ENCODE measurements at regions of chr13 and their contacts with region 1.

Region 1: GRCh38 chr13:72541674-72542073 is 185.8 kb downstream of the MZT1 start:
- DNase-seq: no peak
- ATAC-seq: no peak
- H3K4me3 ChIP-seq: no peak overlapping the region
- H3K27ac ChIP-seq: no peak overlapping the region
- H3K4me1 ChIP-seq: peaks cover 67% of the 10 kb centered on the region
- H3K27me3 ChIP-seq: no peaks in the 10 kb centered on the region
- CTCF ChIP-seq: no peak
- EP300 ChIP-seq: no peak
- POLR2A ChIP-seq: no peak
- RAD21 ChIP-seq: no peak

Region 2: DNA sequence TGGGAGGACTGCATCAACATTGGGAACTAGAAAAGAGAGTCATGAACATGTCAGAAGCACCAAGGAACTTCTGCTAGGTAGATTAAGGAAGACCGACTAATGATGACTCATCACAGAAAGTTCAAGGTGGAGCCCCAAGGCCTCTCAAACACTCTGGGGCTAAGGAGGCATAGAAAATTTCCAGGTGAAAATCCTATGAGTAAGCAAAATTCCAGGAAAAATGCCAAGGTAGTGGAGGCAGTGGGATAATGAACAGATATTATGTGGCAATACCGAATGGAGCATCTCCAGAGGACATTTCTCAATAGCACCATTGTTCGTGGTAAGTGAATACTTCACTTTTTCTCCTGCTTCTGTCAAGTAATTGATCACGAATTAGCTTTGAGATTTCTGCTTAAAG is 150.8 kb before region 1 on chr13:
- CTCF ChIA-PET with region 1: no interaction called
- POLR2A ChIA-PET with region 1: no interaction called
- in situ Hi-C with region 1: no loop called
- intact Hi-C with region 1: loop called (anchors 10 kb)
- DNase-seq: peak; percentile 10
- ATAC-seq: no peak
- H3K4me3 ChIP-seq: no peak overlapping the region
- H3K27ac ChIP-seq: no peak overlapping the region
- H3K4me1 ChIP-seq: peaks cover 9% of the 10 kb centered on the region; the same call in 1 of the 2 replicates
- H3K27me3 ChIP-seq: no peaks in the 10 kb centered on the region
- CTCF ChIP-seq: no peak
- EP300 ChIP-seq: no peak
- POLR2A ChIP-seq: no peak
- RAD21 ChIP-seq: no peak

Region 3: DNA sequence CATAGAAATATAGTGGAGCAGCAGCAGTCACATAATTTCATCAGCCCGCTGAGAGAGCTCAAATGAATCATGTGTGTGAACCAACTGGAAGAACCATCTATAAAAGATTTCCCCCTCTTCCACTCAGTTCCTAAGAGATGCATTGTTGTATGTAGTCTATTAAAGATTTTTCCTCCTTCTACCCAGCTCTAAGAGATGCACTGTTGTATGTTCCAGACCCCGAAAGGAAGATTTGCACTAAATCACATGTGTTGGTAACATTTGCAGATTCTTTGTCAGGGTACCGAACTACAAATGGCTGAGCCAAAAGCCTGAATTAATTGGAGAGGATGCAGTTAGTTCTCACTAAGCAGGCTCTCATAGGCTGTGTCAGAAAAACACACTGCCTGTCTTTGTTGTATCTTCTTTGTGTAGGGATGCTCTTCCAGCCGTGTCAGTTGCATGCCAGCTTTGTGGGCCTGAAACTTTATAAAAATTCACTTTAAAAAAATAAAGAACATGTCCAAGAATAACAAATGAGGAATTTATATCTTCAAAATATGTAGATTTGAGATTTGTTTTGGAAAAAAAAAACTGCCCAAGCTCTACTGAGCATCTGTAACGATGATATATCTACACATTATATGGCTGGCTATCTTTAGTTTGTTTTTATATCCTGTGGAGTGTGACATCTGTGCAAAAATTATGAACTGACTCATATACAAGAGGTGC is 37.4 kb before region 1 on chr13:
- CTCF ChIA-PET with region 1: no interaction called
- POLR2A ChIA-PET with region 1: no interaction called
- in situ Hi-C with region 1: no loop called
- intact Hi-C with region 1: no loop called
- DNase-seq: no peak
- ATAC-seq: peak; percentile 37; the same call in 1 of the 3 replicates
- H3K4me3 ChIP-seq: no peak overlapping the region
- H3K27ac ChIP-seq: no peak overlapping the region
- H3K4me1 ChIP-seq: peaks cover 36% of the 10 kb centered on the region
- H3K27me3 ChIP-seq: no peaks in the 10 kb centered on the region
- CTCF ChIP-seq: no peak
- EP300 ChIP-seq: no peak
- POLR2A ChIP-seq: no peak
- RAD21 ChIP-seq: no peak

Region 4: GRCh38 chr13:72552731-72553130 is 11.1 kb after region 1 on chr13:
- CTCF ChIA-PET with region 1: no interaction called
- POLR2A ChIA-PET with region 1: no interaction called
- in situ Hi-C with region 1: no loop called
- intact Hi-C with region 1: no loop called
- DNase-seq: no peak
- ATAC-seq: no peak
- H3K4me3 ChIP-seq: no peak overlapping the region
- H3K27ac ChIP-seq: no peak overlapping the region
- H3K4me1 ChIP-seq: peaks cover 44% of the 10 kb centered on the region
- H3K27me3 ChIP-seq: no peaks in the 10 kb centered on the region
- CTCF ChIP-seq: no peak
- EP300 ChIP-seq: no peak
- POLR2A ChIP-seq: no peak
- RAD21 ChIP-seq: no peak

Region 5: GRCh38 chr13:73365240-73365639 is 823.6 kb after region 1 on chr13:
- CTCF ChIA-PET with region 1: no interaction called
- POLR2A ChIA-PET with region 1: no interaction called
- in situ Hi-C with region 1: no loop called
- intact Hi-C with region 1: no loop called
- DNase-seq: no peak
- ATAC-seq: no peak
- H3K4me3 ChIP-seq: no peak overlapping the region
- H3K27ac ChIP-seq: no peak overlapping the region
- H3K4me1 ChIP-seq: no peaks in the 10 kb centered on the region
- H3K27me3 ChIP-seq: no peaks in the 10 kb centered on the region; a peak in 1 of 5 replicates
- CTCF ChIP-seq: no peak
- EP300 ChIP-seq: no peak
- POLR2A ChIP-seq: no peak
- RAD21 ChIP-seq: no peak

Measured in HepG2 (cell line).